GM12878 (cell line): ENCODE measurements at regions of chr1 and their contacts with region 1.

Region 1: DNA sequence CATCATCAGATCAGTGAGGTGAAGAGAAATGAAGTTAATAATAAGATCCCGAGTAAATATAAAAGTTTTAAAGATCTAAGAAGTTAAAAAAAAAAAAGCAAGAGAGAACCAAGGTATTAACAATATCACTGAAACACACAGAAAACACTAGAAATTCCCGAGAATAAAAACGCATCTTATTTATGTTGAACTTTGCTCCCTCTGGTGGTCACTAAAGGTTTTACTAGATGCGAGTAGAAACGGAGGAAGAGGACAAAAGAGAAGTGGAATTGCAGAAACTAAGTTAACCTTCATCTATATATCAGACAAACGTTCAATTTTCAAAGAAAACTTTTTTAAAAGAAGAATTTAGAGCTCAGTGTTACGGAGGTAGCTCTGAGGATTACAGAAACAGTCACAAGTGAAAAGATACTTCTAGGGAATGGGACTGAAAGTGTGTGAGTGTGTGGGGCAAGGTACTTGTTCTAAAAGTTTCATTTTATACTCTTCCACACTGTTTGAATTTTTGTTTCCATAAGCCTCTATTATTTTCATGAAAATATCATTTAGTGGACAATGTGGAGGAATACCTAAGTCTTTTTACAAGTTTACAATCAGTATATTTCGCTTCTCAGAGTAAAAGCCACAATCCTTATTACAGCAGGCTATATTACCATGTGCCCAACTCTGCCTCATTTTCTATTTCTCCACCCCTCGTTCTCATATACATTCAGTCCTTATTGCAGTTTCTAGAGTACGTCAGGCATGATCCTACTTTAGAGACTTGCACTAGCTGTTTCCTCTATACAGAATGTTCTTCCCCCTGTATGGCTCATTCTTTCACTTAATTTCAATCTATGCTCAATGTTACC is 19.7 kb downstream of the ACBD6 start:
- DNase-seq: no peak
- ATAC-seq: peak; percentile 74
- H3K4me3 ChIP-seq: no peak overlapping the region
- H3K27ac ChIP-seq: no peak overlapping the region
- H3K4me1 ChIP-seq: no peaks in the 10 kb centered on the region
- H3K27me3 ChIP-seq: no peaks in the 10 kb centered on the region
- CTCF ChIP-seq: peak; percentile 61 to 63 (median 62)
- EP300 ChIP-seq: no peak
- POLR2A ChIP-seq: no peak
- RAD21 ChIP-seq: peak; percentile 62

Region 2: DNA sequence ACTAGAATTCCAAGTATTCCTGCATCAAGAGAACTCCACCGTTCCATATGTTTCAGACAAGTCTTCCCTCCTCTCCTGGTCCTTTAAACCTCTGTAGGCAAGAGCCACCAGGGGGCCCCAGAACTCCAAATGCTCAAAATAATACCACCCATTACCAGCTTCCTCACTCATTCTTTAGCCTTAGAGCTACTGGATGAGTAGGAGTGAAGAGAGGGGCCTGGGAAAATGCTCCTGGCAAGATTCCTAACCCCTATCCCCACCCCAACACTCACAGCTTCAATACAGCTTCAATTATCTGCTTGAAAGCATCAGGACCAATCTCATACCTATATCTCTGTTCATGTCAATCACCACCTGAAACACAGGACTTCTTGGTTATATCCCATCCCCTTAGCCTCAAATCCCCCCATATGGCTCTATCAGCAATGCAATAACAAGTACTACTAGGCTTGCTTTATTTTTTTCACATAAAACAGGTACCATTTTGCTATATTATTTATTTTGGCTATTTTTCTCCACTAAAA is 614.8 kb before region 1 on chr1:
- CTCF ChIA-PET with region 1: no interaction called
- POLR2A ChIA-PET with region 1: no interaction called
- RAD21 ChIA-PET with region 1: no interaction called
- SMC1A ChIA-PET with region 1: no interaction called
- in situ Hi-C with region 1: loop called (anchors 25 kb)
- intact Hi-C with region 1: no loop called
- DNase-seq: no peak
- ATAC-seq: peak; percentile 89
- H3K4me3 ChIP-seq: no peak overlapping the region
- H3K27ac ChIP-seq: no peak overlapping the region
- H3K4me1 ChIP-seq: no peaks in the 10 kb centered on the region
- H3K27me3 ChIP-seq: no peaks in the 10 kb centered on the region
- CTCF ChIP-seq: peak; percentile 72 to 82 (median 79)
- EP300 ChIP-seq: no peak
- POLR2A ChIP-seq: no peak
- RAD21 ChIP-seq: peak; percentile 92

Region 3: GRCh38 chr1:180252638-180253536 is 229.8 kb before region 1 on chr1:
- CTCF ChIA-PET with region 1: interaction called, 105 read pairs
- POLR2A ChIA-PET with region 1: no interaction called
- RAD21 ChIA-PET with region 1: interaction called, 25 read pairs
- SMC1A ChIA-PET with region 1: interaction called, 37 read pairs
- in situ Hi-C with region 1: loop called (anchors 5 kb)
- intact Hi-C with region 1: loop called (anchors 1 kb)
- DNase-seq: peak; percentile 37
- ATAC-seq: peak; percentile 90
- H3K4me3 ChIP-seq: no peak overlapping the region
- H3K27ac ChIP-seq: no peak overlapping the region
- H3K4me1 ChIP-seq: no peaks in the 10 kb centered on the region; the same call in 1 of the 2 replicates
- H3K27me3 ChIP-seq: no peaks in the 10 kb centered on the region
- CTCF ChIP-seq: peak; percentile 87 to 92 (median 92)
- EP300 ChIP-seq: no peak
- POLR2A ChIP-seq: no peak
- RAD21 ChIP-seq: peak; percentile 86

Region 4: DNA sequence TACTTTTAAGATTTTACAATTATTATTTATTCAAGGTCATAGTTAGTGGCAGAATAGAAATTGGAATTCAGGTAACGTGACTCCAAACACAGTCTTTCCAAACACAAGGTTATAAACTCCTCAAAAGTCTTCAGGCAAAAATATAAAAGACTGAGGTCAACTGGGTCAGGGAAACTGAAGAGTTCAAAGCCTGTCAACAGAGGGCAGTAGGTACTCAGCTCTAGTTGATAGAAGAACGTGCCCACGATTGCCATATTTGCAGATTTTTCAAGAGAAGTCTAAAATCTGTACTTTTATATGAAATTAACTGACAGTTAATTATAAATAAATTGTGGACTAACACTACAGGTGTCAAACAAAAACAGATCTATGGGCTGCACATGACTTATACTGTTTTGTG is 117.6 kb before region 1 on chr1:
- CTCF ChIA-PET with region 1: interaction called, 19 read pairs
- POLR2A ChIA-PET with region 1: no interaction called
- RAD21 ChIA-PET with region 1: interaction called, 6 read pairs
- SMC1A ChIA-PET with region 1: interaction called, 5 read pairs
- in situ Hi-C with region 1: no loop called
- intact Hi-C with region 1: loop called (anchors 2 kb)
- DNase-seq: no peak
- ATAC-seq: peak; percentile 61; the same call in 2 of the 3 replicates
- H3K4me3 ChIP-seq: no peak overlapping the region
- H3K27ac ChIP-seq: no peak overlapping the region
- H3K4me1 ChIP-seq: no peaks in the 10 kb centered on the region
- H3K27me3 ChIP-seq: no peaks in the 10 kb centered on the region
- CTCF ChIP-seq: peak; percentile 26 to 46 (median 36); a peak in 5 of 6 replicates
- EP300 ChIP-seq: no peak
- POLR2A ChIP-seq: no peak
- RAD21 ChIP-seq: peak; percentile 29

Region 5: DNA sequence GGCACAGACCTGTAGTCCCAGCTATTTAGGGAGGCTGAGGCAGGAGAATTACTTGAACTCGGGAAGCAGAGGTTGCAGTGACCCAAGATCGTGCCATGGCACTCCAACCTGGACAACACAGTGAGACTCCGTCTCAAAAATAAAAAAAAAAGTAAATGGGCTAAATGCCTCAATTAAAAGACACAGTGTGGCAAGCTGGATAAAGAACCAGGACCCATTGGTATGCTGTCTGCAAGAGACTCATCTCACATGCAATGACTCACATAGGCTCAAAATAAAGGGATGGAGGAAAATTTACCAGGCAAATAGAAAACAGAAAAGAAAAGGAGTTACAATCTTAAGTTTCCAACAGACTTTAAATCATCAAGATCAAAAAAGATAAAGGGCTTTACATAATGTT is 20.5 kb before region 1 on chr1:
- CTCF ChIA-PET with region 1: interaction called, 19 read pairs
- POLR2A ChIA-PET with region 1: no interaction called
- RAD21 ChIA-PET with region 1: no interaction called
- SMC1A ChIA-PET with region 1: interaction called, 7 read pairs
- in situ Hi-C with region 1: no loop called
- intact Hi-C with region 1: no loop called
- DNase-seq: no peak
- ATAC-seq: no peak
- H3K4me3 ChIP-seq: no peak overlapping the region
- H3K27ac ChIP-seq: no peak overlapping the region
- H3K4me1 ChIP-seq: no peaks in the 10 kb centered on the region
- H3K27me3 ChIP-seq: no peaks in the 10 kb centered on the region
- CTCF ChIP-seq: no peak
- EP300 ChIP-seq: no peak
- POLR2A ChIP-seq: no peak
- RAD21 ChIP-seq: no peak

Region 6: GRCh38 chr1:180502360-180503273 is 20.0 kb after region 1 on chr1 and contains the start of gene ACBD6:
- CTCF ChIA-PET with region 1: interaction called, 37 read pairs
- POLR2A ChIA-PET with region 1: no interaction called
- RAD21 ChIA-PET with region 1: interaction called, 28 read pairs
- SMC1A ChIA-PET with region 1: interaction called, 15 read pairs
- in situ Hi-C with region 1: no loop called
- intact Hi-C with region 1: no loop called
- DNase-seq: peak; percentile 51
- ATAC-seq: peak; percentile 91
- H3K4me3 ChIP-seq: peak within 1 kb of the TSS; percentile 82
- H3K27ac ChIP-seq: peak within 1 kb of the TSS; percentile 94
- H3K4me1 ChIP-seq: no peaks in the 10 kb centered on the region
- H3K27me3 ChIP-seq: no peaks in the 10 kb centered on the region
- CTCF ChIP-seq: peak; percentile 5 to 33 (median 14); a peak in 3 of 6 replicates
- EP300 ChIP-seq: peak in 1 of 2 experiments; percentile 54; a peak in 3 of 4 replicates
- POLR2A ChIP-seq: peak; percentile 92; the same call in 1 of the 2 replicates
- RAD21 ChIP-seq: no peak
- polyA plus RNA-seq, gene ACBD6: 15.0 to 38.7 TPM